ENCODE measurements at regions of chr5 and their contacts with region 1.

Region 1: DNA sequence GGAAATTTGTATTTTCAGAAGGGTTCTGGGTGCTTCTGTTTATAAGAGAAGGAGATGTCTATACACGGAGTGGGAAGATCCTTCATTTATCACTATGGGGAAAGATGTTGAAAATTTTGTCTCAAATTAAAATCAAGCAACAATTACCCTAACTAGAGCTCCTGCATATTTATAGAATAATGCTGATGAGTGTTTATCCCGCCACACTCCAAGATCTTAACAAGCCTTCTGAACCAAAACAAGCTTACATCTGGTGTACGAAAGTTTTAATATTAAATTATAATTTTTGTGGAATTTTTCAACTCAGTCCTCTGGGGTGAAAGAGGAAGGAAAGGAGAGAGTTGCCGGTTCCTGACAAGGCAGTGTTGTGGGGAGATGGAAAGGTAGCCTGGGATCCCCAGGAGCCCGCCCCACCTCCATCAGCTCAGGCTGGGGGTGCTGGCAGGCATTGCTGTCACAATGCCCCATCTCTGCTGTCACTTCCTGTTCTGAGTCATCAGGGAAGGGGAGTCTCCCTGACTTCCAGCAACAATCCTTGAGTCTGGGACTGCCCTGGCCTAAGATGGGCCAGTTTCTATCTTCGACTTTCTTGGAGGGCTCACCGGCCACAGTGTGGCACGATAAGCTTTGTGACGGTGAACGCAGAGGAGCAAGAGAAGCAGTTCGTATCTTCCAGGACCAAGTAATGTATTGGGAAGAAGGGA is 64.5 kb downstream of the ERAP1 start:
- DNase-seq: peak in 3 of 5 donors; percentile 43 to 74 (median 50)
- ATAC-seq: peak; percentile 43 to 70 (median 62)
- H3K4me3 ChIP-seq: peak overlapping the region in 8 of 12 donors; percentile 5 to 34 (median 10)
- H3K27ac ChIP-seq: peak overlapping the region; percentile 66 to 88 (median 79)
- H3K4me1 ChIP-seq: peaks cover 0 to 72% (median 48%) of the 10 kb centered on the region in 12 donors
- H3K27me3 ChIP-seq: no peaks in the 10 kb centered on the region
- CTCF ChIP-seq: no peak
- POLR2A ChIP-seq: peak in 1 of 2 donors; percentile 33

Region 2: GRCh38 chr5:96431376-96432187 is 311.6 kb before region 1 on chr5:
- intact Hi-C with region 1: no loop called
- DNase-seq: peak in 2 of 5 donors; percentile 11 to 52
- ATAC-seq: peak in 1 of 4 donors; percentile 46
- H3K4me3 ChIP-seq: peak overlapping the region in 5 of 12 donors; percentile 2 to 23 (median 21)
- H3K27ac ChIP-seq: no peak overlapping the region
- H3K4me1 ChIP-seq: peaks cover 0 to 35% (median 9%) of the 10 kb centered on the region in 12 donors
- H3K27me3 ChIP-seq: peaks cover 10 to 52% (median 43%) of the 10 kb centered on the region in 9 donors
- CTCF ChIP-seq: no peak
- POLR2A ChIP-seq: no peak

Region 3: DNA sequence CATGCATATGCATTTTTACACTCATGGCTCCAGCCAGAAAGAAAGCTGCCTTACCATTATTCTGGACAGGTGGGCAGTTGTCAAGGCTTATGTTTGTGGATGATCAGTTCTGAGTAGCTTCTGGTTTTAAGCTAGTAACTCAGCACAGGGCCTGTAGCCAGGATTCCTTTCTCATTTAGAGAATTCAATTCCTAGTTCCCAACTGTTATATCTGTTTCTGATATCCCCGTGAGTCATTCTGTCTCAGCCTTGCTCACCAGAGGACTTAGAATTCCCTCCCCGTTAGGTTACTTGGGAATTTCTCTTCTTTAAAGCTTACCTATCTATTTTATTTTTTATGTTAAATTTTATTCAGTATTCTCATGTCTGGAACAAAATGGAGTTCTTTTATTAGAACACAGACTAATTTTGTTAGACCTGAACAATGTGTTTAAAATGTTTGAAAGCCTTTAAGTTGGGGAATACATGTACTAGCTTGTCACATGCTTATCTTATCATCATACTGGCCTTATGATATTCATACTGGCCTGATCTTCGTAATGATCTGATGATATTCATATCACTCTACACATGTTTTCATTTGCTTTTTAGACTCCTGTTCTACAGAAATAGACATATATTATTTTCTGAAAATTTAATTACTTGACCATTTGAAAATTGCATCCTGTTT is 33.9 kb before region 1 on chr5:
- intact Hi-C with region 1: loop called in 5 of 10 experiments (anchors 5 kb)
- DNase-seq: no peak
- ATAC-seq: peak in 3 of 4 donors; percentile 43 to 48 (median 48)
- H3K4me3 ChIP-seq: no peak overlapping the region
- H3K27ac ChIP-seq: peak overlapping the region; percentile 36 to 98 (median 64)
- H3K4me1 ChIP-seq: peaks cover 4 to 92% (median 64%) of the 10 kb centered on the region in 12 donors
- H3K27me3 ChIP-seq: no peaks in the 10 kb centered on the region
- CTCF ChIP-seq: no peak
- POLR2A ChIP-seq: no peak

Measured in heart left ventricle (tissue), 16 donors.